Esophagus squamous epithelium (tissue), 5 donors: ENCODE measurements at regions of chr6 and their contacts with region 1.

Region 1: DNA sequence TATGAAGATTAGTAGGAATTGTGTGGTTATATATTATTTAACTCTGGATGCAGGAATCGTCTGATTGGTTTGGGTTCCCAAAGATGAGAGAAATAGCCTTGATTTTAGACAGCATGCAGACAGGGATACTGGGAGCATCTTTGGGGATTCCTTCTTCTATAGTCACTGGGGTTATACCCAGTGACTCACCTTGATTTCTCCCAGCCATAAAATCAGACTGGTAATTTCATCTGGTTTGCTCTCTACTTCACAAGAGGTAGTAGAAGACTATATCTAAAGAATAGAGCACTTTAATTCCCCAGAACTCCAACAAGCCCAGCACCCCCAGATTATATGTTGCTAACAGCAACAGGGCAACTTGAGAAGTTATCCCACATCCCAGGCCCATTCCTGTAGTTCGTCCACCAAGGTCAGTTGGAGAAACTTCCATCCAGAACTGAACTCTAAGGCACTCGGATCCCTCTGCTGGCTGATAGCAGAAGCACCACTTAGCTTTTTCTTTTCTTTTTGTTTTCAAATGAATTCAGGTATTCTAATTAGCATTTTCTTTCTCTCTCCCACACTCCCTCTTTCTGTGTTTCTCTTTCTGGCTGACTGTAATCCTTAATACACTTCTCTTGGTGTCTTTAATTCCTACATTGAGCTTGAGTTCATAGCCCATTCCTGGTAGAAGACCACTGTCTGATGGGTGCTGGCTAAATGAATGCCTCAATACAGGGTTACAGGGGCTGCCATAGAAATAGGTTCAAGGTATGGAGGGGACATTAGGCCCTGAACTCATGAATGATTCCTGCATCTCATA is 20.4 kb upstream of the EFHC1 start:
- DNase-seq: no peak
- H3K4me3 ChIP-seq: no peak overlapping the region
- H3K27ac ChIP-seq: no peak overlapping the region
- H3K4me1 ChIP-seq: peaks cover 5 to 25% (median 7%) of the 10 kb centered on the region in 3 donors
- H3K27me3 ChIP-seq: no peaks in the 10 kb centered on the region
- CTCF ChIP-seq: peak; percentile 76 to 87 (median 82)
- POLR2A ChIP-seq: no peak

Region 2: DNA sequence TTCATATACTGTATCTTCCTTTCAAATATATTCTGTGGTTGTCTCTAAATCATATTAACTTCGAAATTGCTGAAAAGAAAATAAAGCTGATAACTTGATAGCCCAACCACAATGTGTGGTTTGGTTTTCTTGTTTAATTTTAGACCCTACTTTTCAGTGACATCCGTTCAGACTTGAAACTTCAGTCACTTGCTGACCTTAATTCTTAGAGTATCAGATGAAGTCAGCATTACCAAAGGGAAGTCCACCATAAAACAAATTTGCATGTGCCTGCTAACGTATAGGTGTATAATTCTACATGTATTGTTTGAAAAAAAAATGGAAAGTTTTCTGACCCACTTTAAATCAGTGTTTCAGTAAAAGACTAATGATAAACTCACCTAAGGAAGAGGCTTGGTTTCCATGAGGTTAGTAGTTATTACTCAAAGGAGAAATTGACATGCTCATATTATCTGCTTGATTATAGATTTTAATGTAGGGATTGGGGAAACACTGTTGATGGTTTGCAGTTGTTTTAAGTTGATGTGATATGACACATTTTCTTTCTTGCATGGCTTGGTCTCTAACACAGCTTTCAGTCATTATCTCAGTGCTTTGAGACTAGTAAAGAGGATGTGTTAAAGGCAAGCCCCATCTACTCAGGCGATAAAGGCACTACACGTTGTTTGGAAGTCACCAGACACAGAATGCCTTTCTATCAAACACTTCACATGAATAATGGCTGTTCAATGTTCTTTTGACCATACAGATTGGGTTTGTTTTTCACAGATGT is 218.7 kb before region 1 on chr6:
- intact Hi-C with region 1: no loop called
- DNase-seq: no peak
- H3K4me3 ChIP-seq: no peak overlapping the region
- H3K27ac ChIP-seq: no peak overlapping the region
- H3K4me1 ChIP-seq: no peaks in the 10 kb centered on the region
- H3K27me3 ChIP-seq: no peaks in the 10 kb centered on the region
- CTCF ChIP-seq: no peak
- POLR2A ChIP-seq: no peak

Region 3: GRCh38 chr6:52284460-52285176 is 115.1 kb before region 1 on chr6 and contains the start of gene MCM3:
- intact Hi-C with region 1: loop called (anchors 10 kb)
- DNase-seq: peak; percentile 90
- H3K4me3 ChIP-seq: peak within 1 kb of the TSS; percentile 61 to 94 (median 84)
- H3K27ac ChIP-seq: peak within 1 kb of the TSS; percentile 51 to 86 (median 78)
- H3K4me1 ChIP-seq: peaks cover 0 to 33% (median 12%) of the 10 kb centered on the region in 3 donors
- H3K27me3 ChIP-seq: no peaks in the 10 kb centered on the region
- CTCF ChIP-seq: peak in 3 of 6 experiments; percentile 27 to 39 (median 31)
- POLR2A ChIP-seq: peak in 1 of 4 donors; percentile 12
- total RNA-seq, gene MCM3: 37.5 to 70.3 (median 47.7) TPM

Region 4: DNA sequence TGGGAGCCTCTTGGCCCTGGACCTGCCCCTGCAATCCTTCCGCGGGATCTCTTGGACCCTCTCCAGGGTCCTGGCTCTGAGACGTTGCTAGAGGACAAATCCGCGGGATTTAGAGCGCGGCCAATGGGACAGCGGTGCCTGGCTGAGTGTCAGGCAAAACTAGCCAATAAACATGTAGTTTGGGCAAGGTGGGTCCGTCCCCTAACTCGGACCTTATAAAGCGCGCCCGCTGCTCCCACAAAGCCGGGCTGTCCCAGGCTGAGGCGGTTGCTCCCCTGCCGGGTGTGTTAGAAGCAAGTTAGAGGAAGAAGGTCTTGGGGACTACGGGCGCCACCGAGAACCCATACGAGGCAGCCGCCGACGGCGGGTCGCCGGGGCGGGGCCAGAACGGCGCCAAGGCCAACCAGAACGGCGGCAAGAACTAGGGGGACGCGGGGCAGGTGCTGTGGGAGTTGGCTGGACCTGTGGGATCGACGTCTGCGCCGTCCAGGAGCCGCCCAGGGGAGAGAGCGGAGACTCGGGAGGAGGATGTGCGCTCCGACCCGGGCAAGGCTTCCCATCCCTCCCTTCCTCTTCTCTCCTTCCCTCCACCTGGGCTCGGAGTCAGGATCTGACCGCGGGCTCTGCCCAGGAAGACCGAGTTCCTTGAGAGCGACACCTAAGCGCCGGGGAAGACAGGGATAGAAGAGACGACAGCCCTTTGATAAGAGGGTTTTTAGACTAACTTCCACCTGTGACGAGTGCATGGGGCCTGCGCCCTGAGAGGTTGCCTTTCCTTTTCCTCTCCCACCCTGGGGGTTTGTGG is 264.7 kb after region 1 on chr6:
- intact Hi-C with region 1: loop called (anchors 5 kb)
- DNase-seq: peak; percentile 48
- H3K4me3 ChIP-seq: peak overlapping the region; percentile 60 to 86 (median 73)
- H3K27ac ChIP-seq: peak overlapping the region; percentile 80 to 86 (median 82)
- H3K4me1 ChIP-seq: peaks cover 8 to 39% (median 19%) of the 10 kb centered on the region in 3 donors
- H3K27me3 ChIP-seq: no peaks in the 10 kb centered on the region
- CTCF ChIP-seq: no peak
- POLR2A ChIP-seq: peak in 3 of 4 donors; percentile 57 to 88 (median 74)